H1 (cell line): ENCODE measurements at regions of chr16 and their contacts with region 1.

Region 1: GRCh38 chr16:57906382-57907316 is 64.3 kb downstream of the CNGB1 start:
- DNase-seq: peak in 1 of 2 experiments; percentile 88
- H3K4me3 ChIP-seq: no peak overlapping the region
- H3K27ac ChIP-seq: no peak overlapping the region
- H3K4me1 ChIP-seq: peaks cover 0 to under 1% (median 0%) of the 10 kb centered on the region in 4 experiments; a peak in 1 of 7 replicates
- H3K27me3 ChIP-seq: no peaks in the 10 kb centered on the region
- CTCF ChIP-seq: peak; percentile 77 to 85 (median 80)
- EP300 ChIP-seq: no peak
- POLR2A ChIP-seq: no peak
- RAD21 ChIP-seq: peak; percentile 79 to 85

Region 2: GRCh38 chr16:57757326-57757786 is 149.3 kb before region 1 on chr16:
- CTCF ChIA-PET with region 1: interaction called, 10 read pairs
- POLR2A ChIA-PET with region 1: no interaction called
- DNase-seq: peak in 1 of 2 experiments; percentile 99
- H3K4me3 ChIP-seq: no peak overlapping the region
- H3K27ac ChIP-seq: no peak overlapping the region
- H3K4me1 ChIP-seq: peaks cover 0 to 12% (median 7%) of the 10 kb centered on the region in 4 experiments; a peak in 4 of 7 replicates
- H3K27me3 ChIP-seq: no peaks in the 10 kb centered on the region; a peak in 1 of 7 replicates
- CTCF ChIP-seq: peak; percentile 89 to 93 (median 91)
- EP300 ChIP-seq: no peak
- POLR2A ChIP-seq: no peak
- RAD21 ChIP-seq: peak; percentile 86 to 91

Region 3: DNA sequence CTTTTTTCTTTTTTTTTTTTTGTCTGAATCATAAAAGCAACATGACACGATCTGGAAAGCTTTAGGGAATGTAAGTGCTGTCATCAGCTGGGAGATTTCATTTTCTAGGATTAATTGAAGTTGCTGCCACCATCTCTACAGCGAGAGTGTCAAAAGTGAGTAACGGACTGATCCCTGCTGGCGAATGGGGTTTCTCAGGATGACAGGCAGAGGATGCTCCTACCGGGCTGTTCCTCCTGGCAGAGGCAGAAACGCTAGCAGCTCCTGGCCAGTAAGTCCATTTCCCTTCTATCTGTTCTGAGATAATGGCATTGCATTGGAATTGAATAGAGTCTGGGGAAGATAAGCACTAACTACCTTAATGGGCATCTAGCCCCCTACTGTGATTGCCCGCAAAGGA is 23.9 kb before region 1 on chr16:
- CTCF ChIA-PET with region 1: interaction called, 55 read pairs
- POLR2A ChIA-PET with region 1: no interaction called
- DNase-seq: no peak
- H3K4me3 ChIP-seq: no peak overlapping the region
- H3K27ac ChIP-seq: no peak overlapping the region
- H3K4me1 ChIP-seq: peaks cover 0 to 11% (median 3%) of the 10 kb centered on the region in 4 experiments; a peak in 5 of 7 replicates
- H3K27me3 ChIP-seq: peaks cover 0 to 5% (median under 1%) of the 10 kb centered on the region in 4 experiments; a peak in 3 of 7 replicates
- CTCF ChIP-seq: peak in 1 of 3 experiments; percentile 2; a peak in 1 of 4 replicates
- EP300 ChIP-seq: no peak
- POLR2A ChIP-seq: no peak
- RAD21 ChIP-seq: no peak

Region 4: DNA sequence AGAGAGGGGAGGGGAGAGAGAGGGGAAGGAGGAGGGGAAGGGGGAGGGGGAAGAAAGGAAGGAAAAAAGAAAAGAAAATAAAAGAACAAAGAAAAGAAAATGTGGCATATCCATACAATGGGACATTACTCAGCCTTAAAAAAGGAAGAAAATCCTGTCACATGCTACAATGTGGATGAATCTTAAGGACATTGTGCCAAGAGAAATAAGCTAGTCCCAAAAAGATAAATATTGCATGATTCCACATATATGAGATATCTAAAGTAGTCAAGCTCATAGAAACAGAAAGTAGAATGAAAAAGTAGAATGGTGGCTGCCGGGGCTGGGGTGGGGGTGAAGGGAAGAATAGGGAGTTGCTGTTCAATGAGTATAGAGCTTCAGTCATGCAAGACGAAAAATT is 23.9 kb after region 1 on chr16:
- CTCF ChIA-PET with region 1: interaction called, 34 read pairs
- POLR2A ChIA-PET with region 1: no interaction called
- DNase-seq: no peak
- H3K4me3 ChIP-seq: no peak overlapping the region
- H3K27ac ChIP-seq: no peak overlapping the region
- H3K4me1 ChIP-seq: peaks cover 0 to 2% (median 0%) of the 10 kb centered on the region in 4 experiments; a peak in 1 of 7 replicates
- H3K27me3 ChIP-seq: no peaks in the 10 kb centered on the region; a peak in 1 of 7 replicates
- CTCF ChIP-seq: no peak
- EP300 ChIP-seq: no peak
- POLR2A ChIP-seq: no peak
- RAD21 ChIP-seq: no peak

Region 5: GRCh38 chr16:57955572-57956188 is 49.0 kb after region 1 on chr16:
- CTCF ChIA-PET with region 1: interaction called, 40 read pairs
- POLR2A ChIA-PET with region 1: interaction called, 3 read pairs
- DNase-seq: no peak
- H3K4me3 ChIP-seq: no peak overlapping the region
- H3K27ac ChIP-seq: no peak overlapping the region; the same call in 1 of the 2 replicates
- H3K4me1 ChIP-seq: peaks cover 0 to 10% (median 5%) of the 10 kb centered on the region in 4 experiments; a peak in 6 of 7 replicates
- H3K27me3 ChIP-seq: no peaks in the 10 kb centered on the region; a peak in 1 of 7 replicates
- CTCF ChIP-seq: peak in 2 of 3 experiments; percentile 5 to 12; a peak in 2 of 4 replicates
- EP300 ChIP-seq: no peak
- POLR2A ChIP-seq: no peak
- RAD21 ChIP-seq: no peak

Region 6: DNA sequence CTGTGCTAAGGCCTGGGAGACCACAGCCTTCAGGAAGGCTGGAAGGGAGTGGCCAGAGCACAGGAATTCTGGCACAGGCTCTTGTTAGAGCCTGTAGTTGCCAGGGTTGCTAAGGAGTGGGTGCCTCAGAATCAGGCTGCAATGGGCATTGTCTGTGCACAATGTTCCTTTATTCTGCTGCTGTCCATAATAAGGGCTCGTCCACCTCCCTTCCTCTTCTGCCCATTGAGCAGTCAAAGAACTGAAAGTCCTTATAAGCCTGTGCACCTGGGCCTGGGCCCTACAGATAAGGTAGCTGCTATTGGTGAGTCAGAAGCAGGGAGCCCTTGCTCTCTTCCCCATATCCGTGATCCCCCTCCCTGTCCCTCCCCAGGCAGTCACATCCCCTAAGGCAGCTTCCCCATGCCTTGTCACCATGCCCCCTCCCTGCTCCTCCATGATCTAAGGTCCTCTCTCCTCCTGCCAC is 69.7 kb after region 1 on chr16:
- CTCF ChIA-PET with region 1: interaction called, 63 read pairs
- POLR2A ChIA-PET with region 1: no interaction called
- DNase-seq: no peak
- H3K4me3 ChIP-seq: no peak overlapping the region
- H3K27ac ChIP-seq: no peak overlapping the region
- H3K4me1 ChIP-seq: no peaks in the 10 kb centered on the region; a peak in 1 of 7 replicates
- H3K27me3 ChIP-seq: no peaks in the 10 kb centered on the region
- CTCF ChIP-seq: no peak
- EP300 ChIP-seq: no peak
- POLR2A ChIP-seq: no peak
- RAD21 ChIP-seq: no peak